ENCODE measurements at regions of chr6 and their contacts with region 1.

Region 1: GRCh38 chr6:37207903-37208456 is 38.0 kb downstream of the PIM1 start:
- DNase-seq: peak; percentile 97
- ATAC-seq: peak; percentile 94
- H3K4me3 Mint-ChIP-seq: no peak overlapping the region
- H3K27ac Mint-ChIP-seq: no peak overlapping the region
- H3K4me1 Mint-ChIP-seq: peaks cover 5% of the 10 kb centered on the region; the same call in 1 of the 2 replicates
- H3K27me3 Mint-ChIP-seq: peaks cover 3% of the 10 kb centered on the region; the same call in 1 of the 2 replicates
- CTCF ChIP-seq: peak; percentile 70

Region 2: DNA sequence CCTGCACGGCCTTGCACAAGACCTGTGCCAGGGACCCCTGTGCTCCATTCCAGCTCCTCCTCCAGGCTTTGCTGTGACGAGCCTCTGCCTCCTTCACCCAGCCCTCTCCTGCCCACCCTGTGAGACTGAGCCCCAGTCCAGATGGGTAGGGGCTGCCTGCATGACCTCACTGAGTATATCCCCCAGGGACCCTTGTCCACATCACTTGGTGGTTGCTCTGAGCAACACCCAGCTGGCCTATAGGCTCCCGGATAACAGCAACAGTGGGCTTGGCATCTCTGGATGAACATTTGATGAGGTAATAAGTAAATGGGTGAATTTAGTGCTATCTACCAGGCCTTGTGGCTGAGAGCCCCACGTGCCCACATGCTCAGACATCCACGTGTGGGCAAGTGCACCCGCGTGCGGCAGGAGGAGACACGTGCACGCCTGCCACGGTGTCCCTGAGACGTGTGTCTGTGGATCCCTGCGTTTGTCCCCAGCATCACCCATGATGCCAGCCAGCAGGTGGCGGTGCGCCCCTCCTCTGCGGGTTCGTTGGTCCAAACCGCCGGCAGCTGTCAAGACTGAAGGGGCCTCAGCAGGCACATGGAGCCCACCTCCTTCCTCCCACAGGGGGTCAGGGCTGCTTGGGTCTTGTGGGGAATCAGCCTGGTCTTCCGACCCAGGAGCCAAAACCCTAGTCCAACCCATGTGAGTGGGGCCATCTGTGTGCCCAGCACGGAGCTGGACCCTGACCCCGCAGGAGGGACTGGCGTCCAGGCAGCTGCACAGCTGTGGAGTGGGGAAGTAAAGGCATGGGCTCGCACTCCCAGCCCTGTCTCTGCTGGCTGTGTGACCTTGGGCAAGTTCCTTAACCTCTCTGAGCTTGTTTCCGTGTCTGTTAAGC is 156.6 kb before region 1 on chr6:
- CTCF ChIA-PET with region 1: interaction called, 58 read pairs
- POLR2A ChIA-PET with region 1: interaction called, 3 read pairs
- DNase-seq: peak; percentile 94
- ATAC-seq: peak; percentile 38
- H3K4me3 Mint-ChIP-seq: peak overlapping the region; percentile 25
- H3K27ac Mint-ChIP-seq: peak overlapping the region; percentile 82
- H3K4me1 Mint-ChIP-seq: peaks cover 37% of the 10 kb centered on the region
- H3K27me3 Mint-ChIP-seq: no peaks in the 10 kb centered on the region
- CTCF ChIP-seq: peak; percentile 71

Region 3: DNA sequence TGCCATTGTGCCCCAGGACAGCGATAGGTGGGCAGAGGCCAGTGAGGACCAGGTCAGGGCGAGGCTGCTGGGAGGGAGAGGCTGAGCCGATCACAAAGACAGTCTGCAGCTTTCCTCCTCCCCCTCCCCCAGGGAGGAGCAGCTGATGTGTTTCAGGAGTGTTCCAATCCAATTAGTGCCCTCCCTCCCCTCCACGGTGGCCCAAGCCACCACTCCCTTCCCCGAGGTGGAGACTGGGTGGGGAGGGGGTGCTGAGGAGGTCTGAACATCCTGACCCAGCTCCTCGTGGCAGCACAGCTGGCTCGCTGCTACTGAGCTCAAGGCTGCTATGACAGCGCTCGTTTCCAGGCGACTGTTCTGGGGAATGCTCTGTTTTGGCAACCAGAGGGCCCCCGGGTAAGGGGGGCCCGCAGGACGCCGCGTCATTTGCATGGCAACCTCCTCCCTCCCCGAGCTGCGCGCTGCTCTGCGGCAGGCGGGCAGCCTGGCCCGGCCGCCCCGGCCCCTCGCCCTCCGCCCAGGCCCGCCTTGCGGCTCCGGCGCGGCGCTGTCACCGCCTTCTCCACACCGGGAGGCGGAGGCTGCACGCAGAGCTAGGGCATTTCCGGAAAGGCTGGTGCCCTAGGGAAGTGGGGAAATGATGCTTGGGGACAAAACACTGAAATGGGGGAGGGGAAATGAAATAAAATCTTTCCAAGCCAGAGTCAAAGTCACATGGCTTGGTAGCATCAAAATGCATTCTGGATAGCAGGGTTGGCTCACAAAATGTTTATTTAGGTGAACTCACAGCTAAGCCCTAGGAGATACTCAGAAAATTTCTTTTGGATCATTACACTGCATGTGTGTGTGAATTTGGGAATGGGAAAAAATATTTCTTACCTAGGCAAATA is 105.5 kb before region 1 on chr6:
- CTCF ChIA-PET with region 1: interaction called, 12 read pairs
- POLR2A ChIA-PET with region 1: no interaction called
- DNase-seq: peak; percentile 92
- ATAC-seq: peak; percentile 80
- H3K4me3 Mint-ChIP-seq: peak overlapping the region; percentile 66
- H3K27ac Mint-ChIP-seq: peak overlapping the region; percentile 94
- H3K4me1 Mint-ChIP-seq: peaks cover 62% of the 10 kb centered on the region
- H3K27me3 Mint-ChIP-seq: no peaks in the 10 kb centered on the region; the same call in 1 of the 2 replicates
- CTCF ChIP-seq: no peak

Region 4: GRCh38 chr6:37222125-37222967 is 14.4 kb after region 1 on chr6:
- CTCF ChIA-PET with region 1: interaction called, 24 read pairs
- POLR2A ChIA-PET with region 1: interaction called, 4 read pairs
- DNase-seq: peak; percentile 94
- ATAC-seq: peak; percentile 96
- H3K4me3 Mint-ChIP-seq: peak overlapping the region; percentile 86
- H3K27ac Mint-ChIP-seq: peak overlapping the region; percentile 91
- H3K4me1 Mint-ChIP-seq: peaks cover 13% of the 10 kb centered on the region
- H3K27me3 Mint-ChIP-seq: no peaks in the 10 kb centered on the region
- CTCF ChIP-seq: no peak